ENCODE measurements at regions of chr17 and their contacts with region 1.

Region 1: DNA sequence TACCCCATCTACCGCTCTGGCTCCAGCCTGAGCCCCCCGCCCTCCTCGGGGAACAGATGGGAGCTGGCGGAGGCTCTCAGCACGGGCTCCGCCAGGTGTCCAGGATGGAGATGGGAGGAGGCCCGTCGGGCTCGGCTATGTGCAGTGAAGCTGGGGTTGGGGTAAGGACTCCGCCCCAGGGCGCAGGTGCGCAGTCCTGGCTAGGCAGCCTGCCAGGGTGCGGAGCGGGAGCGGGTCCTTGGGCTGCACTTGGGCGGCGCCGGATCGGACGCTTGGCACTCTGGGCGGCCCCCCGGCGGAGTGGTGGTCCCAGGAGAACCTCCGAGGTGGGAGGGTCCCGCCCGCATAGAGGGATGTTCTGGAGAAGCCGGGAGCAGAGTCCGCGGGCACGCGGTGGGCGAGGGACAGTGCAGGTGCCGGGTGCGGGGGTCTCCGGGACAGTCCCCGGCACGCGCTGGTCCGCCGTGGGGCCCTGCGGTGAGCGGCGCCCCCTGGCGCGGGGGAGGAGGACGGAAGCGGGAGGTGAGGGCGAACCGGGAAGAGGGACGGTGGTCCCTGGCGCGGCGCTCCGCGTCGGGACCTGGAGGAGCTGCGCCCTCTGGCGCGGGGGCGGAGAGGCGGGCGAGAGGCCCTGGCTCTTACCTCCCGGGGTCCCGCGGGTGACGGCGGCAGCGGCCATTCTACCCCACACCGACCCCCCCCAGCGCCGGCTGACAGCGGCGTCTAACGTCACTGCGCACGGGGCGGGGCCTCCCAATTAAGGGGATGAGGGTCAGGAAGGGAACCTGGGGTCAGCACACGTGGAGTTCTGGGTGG is at the start of gene CAMTA2:
- DNase-seq: peak; percentile 82 to 99 (median 88)
- ATAC-seq: peak; percentile 94
- H3K4me3 ChIP-seq: peak within 1 kb of the TSS; percentile 94 to 98
- H3K27ac ChIP-seq: peak within 1 kb of the TSS; percentile 94
- H3K4me1 ChIP-seq: peaks cover 17 to 42% of the 10 kb centered on the region in 2 donors
- H3K27me3 ChIP-seq: no peaks in the 10 kb centered on the region
- CTCF ChIP-seq: peak; percentile 69 to 72
- polyA plus RNA-seq, gene CAMTA2: 28.6 to 40.8 (median 33.3) TPM

Region 2: DNA sequence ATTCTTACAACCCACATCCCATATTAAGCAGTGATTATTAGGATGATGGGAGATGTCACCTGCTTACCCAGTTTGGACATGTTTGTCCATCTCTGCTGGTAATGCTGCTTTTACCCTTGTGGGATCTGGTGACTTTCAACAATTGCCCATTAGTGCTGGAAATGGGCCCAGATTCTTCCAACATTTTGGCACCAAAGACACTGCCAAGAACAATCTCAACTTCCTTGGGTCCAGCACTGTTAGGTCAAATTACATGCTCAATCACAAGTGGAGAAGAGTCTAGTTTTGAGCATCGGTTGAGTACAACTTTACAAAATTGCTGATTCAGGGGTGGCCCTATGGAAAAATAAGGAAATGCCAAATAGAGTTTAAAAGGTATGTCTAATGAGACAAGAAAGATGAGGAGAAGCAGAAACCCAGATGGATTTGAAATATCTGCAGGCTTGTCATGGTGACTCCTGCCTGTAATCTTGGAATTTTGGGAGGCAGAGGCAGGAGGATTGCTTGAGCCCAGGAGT is 78.1 kb after region 1 on chr17:
- intact Hi-C with region 1: loop called in 1 of 2 experiments (anchors 10 kb)
- DNase-seq: no peak
- ATAC-seq: no peak
- H3K4me3 ChIP-seq: no peak overlapping the region
- H3K27ac ChIP-seq: no peak overlapping the region
- H3K4me1 ChIP-seq: no peaks in the 10 kb centered on the region
- H3K27me3 ChIP-seq: no peaks in the 10 kb centered on the region
- CTCF ChIP-seq: no peak